ENCODE measurements at regions of chr3 and their contacts with region 1.

Region 1: GRCh38 chr3:22199095-22199494 is 448.1 kb upstream of the ZNF385D start:
- DNase-seq: no peak
- ATAC-seq: no peak
- H3K4me3 ChIP-seq: no peak overlapping the region
- H3K27ac ChIP-seq: no peak overlapping the region
- H3K4me1 ChIP-seq: no peaks in the 10 kb centered on the region
- H3K27me3 ChIP-seq: no peaks in the 10 kb centered on the region
- CTCF ChIP-seq: no peak

Region 2: GRCh38 chr3:21962456-21962855 is 236.6 kb before region 1 on chr3:
- intact Hi-C with region 1: loop called in 1 of 10 experiments (anchors 5 kb)
- DNase-seq: no peak
- ATAC-seq: no peak
- H3K4me3 ChIP-seq: no peak overlapping the region
- H3K27ac ChIP-seq: no peak overlapping the region
- H3K4me1 ChIP-seq: peaks cover 0 to 12% (median 0%) of the 10 kb centered on the region in 9 donors
- H3K27me3 ChIP-seq: no peaks in the 10 kb centered on the region
- CTCF ChIP-seq: no peak

Measured in heart right ventricle (tissue), 16 donors.